Activated CD8-positive, alpha-beta memory T cell treated with anti-CD3 and anti-CD28 coated beads, Interleukin-2, amount 10 ng/mL, durations not matched to agents 7 days and 5 days (primary cell): ENCODE measurements at regions of chr3 and their contacts with region 1.

Region 1: DNA sequence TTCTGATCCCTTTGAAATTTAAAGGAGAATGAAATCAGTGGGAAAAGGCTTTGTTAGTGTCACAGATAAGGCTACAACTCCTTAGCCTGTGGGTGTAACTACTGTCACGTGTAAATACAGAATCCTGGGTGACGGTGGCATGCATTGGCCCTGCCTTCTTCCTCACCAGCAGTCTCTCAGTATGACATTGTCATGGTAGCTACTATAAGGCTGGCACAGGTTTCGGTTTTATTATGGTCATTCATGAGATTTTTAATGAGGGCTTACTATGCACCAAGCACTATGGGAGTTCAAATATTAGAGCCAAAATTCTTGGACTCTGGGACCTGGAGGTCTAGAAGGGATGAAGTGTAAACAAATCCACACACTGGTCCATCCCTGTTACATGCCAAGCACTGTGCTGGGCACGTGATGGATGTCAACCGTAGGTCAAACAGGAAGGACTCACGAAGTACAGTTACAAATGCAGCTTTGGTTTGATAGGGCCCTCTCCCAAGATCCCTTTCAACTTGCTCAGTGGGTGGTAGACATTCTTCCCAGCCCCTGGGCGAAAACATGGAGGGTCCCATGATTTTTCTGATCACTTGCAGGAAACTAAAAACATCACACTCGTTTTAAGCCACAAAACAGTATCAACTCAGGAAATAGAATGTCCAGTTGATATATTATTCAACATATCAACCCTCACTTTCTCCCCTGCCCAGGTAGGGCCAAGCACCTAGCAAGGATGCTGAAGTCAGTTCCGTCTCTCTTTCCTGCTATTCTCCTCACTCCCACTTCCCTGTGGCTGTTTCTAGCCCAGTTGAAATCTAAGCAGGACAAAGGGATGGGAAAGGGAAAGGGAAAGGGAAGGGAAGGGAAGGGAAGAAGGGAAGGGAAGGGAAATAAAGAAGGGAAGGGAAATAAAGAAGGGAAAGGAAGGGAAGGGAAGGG is 25.3 kb downstream of the BFSP2 start:
- DNase-seq: no peak
- ATAC-seq: no peak
- H3K4me3 Mint-ChIP-seq: no peak overlapping the region
- H3K27ac Mint-ChIP-seq: no peak overlapping the region
- H3K4me1 Mint-ChIP-seq: peaks cover 3% of the 10 kb centered on the region
- H3K27me3 Mint-ChIP-seq: no peaks in the 10 kb centered on the region

Region 2: DNA sequence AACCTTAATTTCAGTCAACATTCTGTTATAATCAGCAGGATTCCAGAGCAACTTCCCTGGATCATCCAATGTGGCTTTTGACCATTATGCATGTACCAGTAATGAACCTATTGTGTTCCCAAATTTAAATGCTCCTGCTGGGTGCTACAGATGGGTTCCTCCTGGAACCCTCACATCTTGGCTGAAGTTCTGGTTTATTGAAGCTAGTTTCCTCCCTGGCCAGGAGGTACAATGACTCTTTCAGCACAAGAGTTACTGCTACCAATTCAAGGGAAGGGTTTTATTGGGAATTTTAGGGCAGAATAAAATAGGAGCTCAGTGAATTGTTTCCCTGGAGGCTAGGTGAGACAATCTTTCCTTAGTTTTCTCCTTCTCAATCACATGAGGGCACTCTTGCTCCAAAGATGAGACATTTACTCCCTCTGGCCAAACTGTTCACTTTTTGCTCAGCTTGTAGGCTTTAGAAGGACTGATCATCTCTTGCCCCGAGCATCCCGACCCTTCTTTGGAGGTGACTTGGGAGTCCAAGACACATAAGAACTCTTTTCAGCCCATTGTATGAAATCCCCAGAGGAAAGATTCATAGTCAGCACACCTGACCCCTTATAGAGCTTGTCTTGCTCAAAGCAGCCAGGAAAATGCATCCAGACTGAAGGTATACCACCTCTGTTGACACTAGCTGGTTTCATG is 694.2 kb before region 1 on chr3:
- CTCF ChIA-PET with region 1: interaction called, 17 read pairs
- DNase-seq: no peak
- ATAC-seq: peak; percentile 47
- H3K4me3 Mint-ChIP-seq: no peak overlapping the region
- H3K27ac Mint-ChIP-seq: no peak overlapping the region
- H3K4me1 Mint-ChIP-seq: peaks cover 1% of the 10 kb centered on the region
- H3K27me3 Mint-ChIP-seq: peaks cover 58% of the 10 kb centered on the region